WTC11 (cell line): ENCODE measurements at regions of chr1 and their contacts with region 1.

Region 1: GRCh38 chr1:39919545-39919944 is 17.8 kb upstream of the MYCL start:
- DNase-seq: peak; percentile 61
- ATAC-seq: peak; percentile 78
- H3K4me3 Mint-ChIP-seq: no peak overlapping the region
- H3K27ac Mint-ChIP-seq: no peak overlapping the region
- H3K4me1 Mint-ChIP-seq: peaks cover 30% of the 10 kb centered on the region
- H3K27me3 Mint-ChIP-seq: peaks cover 6% of the 10 kb centered on the region; the same call in 1 of the 2 replicates
- CTCF ChIP-seq: peak; percentile 54; the same call in 1 of the 2 replicates

Region 2: GRCh38 chr1:39816415-39817090 is 103.0 kb before region 1 on chr1:
- CTCF ChIA-PET with region 1: interaction called, 57 read pairs
- POLR2A ChIA-PET with region 1: interaction called, 3 read pairs
- DNase-seq: peak; percentile 67
- ATAC-seq: peak; percentile 84
- H3K4me3 Mint-ChIP-seq: no peak overlapping the region
- H3K27ac Mint-ChIP-seq: no peak overlapping the region
- H3K4me1 Mint-ChIP-seq: peaks cover 5% of the 10 kb centered on the region; the same call in 1 of the 2 replicates
- H3K27me3 Mint-ChIP-seq: peaks cover 13% of the 10 kb centered on the region
- CTCF ChIP-seq: peak; percentile 79

Region 3: DNA sequence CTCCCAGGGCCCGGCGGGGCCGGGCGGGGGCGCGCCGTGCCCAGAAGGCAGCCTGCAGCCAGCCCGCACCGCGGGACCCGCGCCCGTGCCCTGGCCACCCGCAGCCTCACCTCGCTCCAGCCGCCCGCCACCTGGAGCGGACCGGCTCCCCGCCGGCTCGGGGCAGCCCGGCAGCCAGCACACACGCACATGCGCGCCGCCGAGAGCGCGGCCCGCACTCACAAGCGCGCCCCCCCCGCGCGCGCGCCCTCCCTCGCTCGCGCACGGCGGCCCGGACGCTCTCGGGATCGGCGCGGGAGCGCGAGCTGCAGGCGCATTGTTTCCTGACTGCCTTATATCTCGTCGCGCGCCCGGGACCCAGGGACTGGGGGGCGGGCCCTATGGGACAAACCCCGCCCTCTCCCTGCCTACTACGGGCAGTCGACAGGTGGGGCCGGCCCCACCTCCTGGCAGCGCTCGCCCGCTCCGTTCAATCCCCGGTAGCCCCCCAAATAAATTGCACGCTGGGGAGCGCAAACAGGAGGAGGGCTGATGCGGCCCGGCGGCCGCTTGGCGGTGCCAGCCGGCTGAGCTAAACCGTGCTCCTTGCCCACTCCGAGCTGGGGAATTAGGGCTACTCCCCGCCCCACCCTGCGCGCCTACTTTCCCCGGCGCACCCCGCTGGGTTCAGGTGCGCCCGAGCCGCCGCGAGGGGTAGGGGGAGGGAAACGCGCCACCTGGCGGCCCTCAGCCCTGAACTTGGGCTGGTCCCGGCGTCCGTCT is 17.7 kb before region 1 on chr1 and contains the start of gene MYCL:
- CTCF ChIA-PET with region 1: interaction called, 98 read pairs
- POLR2A ChIA-PET with region 1: interaction called, 19 read pairs
- DNase-seq: peak; percentile 97
- ATAC-seq: peak; percentile 81
- H3K4me3 Mint-ChIP-seq: peak within 1 kb of the TSS; percentile 86
- H3K27ac Mint-ChIP-seq: peak within 1 kb of the TSS; percentile 74; the same call in 1 of the 2 replicates
- H3K4me1 Mint-ChIP-seq: peaks cover 46% of the 10 kb centered on the region
- H3K27me3 Mint-ChIP-seq: peaks cover 30% of the 10 kb centered on the region
- CTCF ChIP-seq: peak; percentile 56
- total RNA-seq, gene MYCL: 31.0 to 32.6 TPM (median 32.2 TPM) in 3 replicates

Region 4: DNA sequence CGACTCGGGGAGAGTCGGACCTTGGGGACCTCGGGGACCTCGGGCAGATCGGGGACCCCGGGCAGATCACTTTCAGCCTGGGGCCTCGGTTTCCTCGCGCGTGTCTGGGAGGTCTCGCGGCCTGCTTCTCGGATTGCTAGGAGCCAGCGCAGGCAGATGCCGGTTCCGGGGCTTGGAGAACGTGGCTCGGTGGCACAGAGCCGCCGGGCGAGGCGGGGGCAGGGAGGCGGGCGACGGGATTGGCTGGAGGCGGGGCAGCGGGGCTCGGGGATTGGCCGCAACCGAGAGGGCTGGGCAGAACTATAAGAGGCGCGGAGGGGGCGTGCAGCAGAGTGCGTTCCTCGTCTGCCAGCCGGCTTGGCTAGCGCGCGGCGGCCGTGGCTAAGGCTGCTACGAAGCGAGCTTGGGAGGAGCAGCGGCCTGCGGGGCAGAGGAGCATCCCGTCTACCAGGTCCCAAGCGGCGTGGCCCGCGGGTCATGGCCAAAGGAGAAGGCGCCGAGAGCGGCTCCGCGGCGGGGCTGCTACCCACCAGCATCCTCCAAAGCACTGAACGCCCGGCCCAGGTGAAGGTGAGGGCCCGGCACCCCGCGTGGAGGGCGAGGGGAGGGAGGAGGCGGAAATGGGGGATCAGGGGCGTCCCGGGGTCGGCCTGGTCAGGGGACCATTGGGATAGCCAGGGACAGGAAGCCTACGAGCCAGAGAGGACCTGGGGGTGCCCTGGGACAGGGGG is 35.4 kb after region 1 on chr1 and contains the start of gene MFSD2A:
- CTCF ChIA-PET with region 1: interaction called, 110 read pairs
- POLR2A ChIA-PET with region 1: interaction called, 11 read pairs
- DNase-seq: peak; percentile 95
- ATAC-seq: peak; percentile 93
- H3K4me3 Mint-ChIP-seq: peak within 1 kb of the TSS; percentile 85
- H3K27ac Mint-ChIP-seq: no peak within 1 kb of the TSS
- H3K4me1 Mint-ChIP-seq: peaks cover 27% of the 10 kb centered on the region
- H3K27me3 Mint-ChIP-seq: peaks cover 35% of the 10 kb centered on the region
- CTCF ChIP-seq: no peak
- total RNA-seq, gene MFSD2A: 11.5 to 14.0 TPM (median 12.9 TPM) in 3 replicates

Region 5: DNA sequence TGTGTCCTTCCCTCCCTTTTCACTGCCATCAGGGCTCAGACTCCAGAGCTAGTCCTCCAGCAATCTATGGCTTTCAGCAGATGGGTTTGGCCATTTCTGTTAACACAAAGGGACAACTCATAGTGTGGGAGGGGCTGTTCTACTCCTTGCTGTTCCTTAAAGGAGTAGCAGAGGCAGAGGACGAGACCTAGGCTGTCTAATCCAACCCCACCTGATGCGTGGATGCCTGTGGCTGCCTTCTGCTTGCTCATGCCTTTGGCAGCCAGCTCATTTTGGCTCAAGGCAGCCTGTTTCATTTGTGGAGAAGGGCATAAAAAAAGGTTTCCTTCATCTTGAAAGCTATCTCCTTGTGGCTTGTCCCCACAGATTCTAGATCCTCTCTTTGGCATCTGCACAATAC is 62.4 kb after region 1 on chr1:
- CTCF ChIA-PET with region 1: interaction called, 30 read pairs
- POLR2A ChIA-PET with region 1: no interaction called
- DNase-seq: no peak
- ATAC-seq: no peak
- H3K4me3 Mint-ChIP-seq: no peak overlapping the region
- H3K27ac Mint-ChIP-seq: 0 out of 2 replicates have a peak overlapping the region, but pooled peaks have one; percentile 68
- H3K4me1 Mint-ChIP-seq: peaks cover 41% of the 10 kb centered on the region
- H3K27me3 Mint-ChIP-seq: no peaks in the 10 kb centered on the region; the same call in 1 of the 2 replicates
- CTCF ChIP-seq: no peak

Region 6: GRCh38 chr1:40032240-40032891 is 112.8 kb after region 1 on chr1:
- CTCF ChIA-PET with region 1: interaction called, 96 read pairs
- POLR2A ChIA-PET with region 1: interaction called, 3 read pairs
- DNase-seq: peak; percentile 31
- ATAC-seq: peak; percentile 69; the same call in 1 of the 2 replicates
- H3K4me3 Mint-ChIP-seq: no peak overlapping the region
- H3K27ac Mint-ChIP-seq: no peak overlapping the region
- H3K4me1 Mint-ChIP-seq: no peaks in the 10 kb centered on the region; the same call in 1 of the 2 replicates
- H3K27me3 Mint-ChIP-seq: peaks cover 3% of the 10 kb centered on the region
- CTCF ChIP-seq: no peak